ENCODE measurements at regions of chr7 and their contacts with region 1.

Region 1: GRCh38 chr7:21253740-21254687 is 173.9 kb upstream of the SP4 start:
- DNase-seq: peak; percentile 24
- H3K4me3 Mint-ChIP-seq: peak overlapping the region; percentile 47
- H3K27ac Mint-ChIP-seq: no peak overlapping the region
- H3K4me1 Mint-ChIP-seq: peaks cover 9% of the 10 kb centered on the region
- H3K27me3 Mint-ChIP-seq: peaks cover 74% of the 10 kb centered on the region

Region 2: DNA sequence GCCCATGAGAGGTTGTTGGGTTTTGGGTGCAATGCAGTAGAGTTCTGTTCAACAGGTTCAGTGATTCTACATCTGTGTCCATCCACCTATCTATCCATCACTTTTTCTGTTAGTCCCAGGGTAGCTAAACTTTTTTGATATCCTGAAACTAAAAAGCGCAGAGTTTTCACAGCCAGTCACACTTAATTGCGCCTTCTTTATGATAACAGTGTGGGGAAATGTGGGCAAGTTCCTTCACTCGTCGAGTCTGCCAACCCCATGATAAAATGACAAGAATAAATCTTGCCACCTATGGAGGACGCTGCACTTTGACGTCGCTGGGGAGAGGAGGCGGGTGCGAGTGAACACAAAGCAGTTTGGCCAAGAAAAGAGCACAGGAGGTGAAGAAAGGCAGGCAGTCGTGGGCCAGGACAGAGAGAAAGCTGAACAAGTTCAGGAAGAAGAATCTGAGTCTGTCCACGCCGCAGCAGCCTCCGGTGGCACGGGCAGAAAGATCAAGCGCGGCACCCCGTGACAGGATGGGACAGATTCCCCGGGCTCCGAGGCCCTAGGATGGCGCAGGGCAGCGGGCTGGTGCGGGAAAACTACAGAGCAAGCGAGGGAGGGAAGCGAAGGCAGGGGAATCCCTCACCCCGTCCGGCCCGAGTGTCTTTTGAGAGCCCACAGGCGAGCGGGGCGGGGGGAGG is 476.5 kb before region 1 on chr7:
- intact Hi-C with region 1: loop called (anchors 1 kb)
- DNase-seq: no peak
- H3K4me3 Mint-ChIP-seq: peak overlapping the region; percentile 20
- H3K27ac Mint-ChIP-seq: no peak overlapping the region
- H3K4me1 Mint-ChIP-seq: peaks cover 5% of the 10 kb centered on the region
- H3K27me3 Mint-ChIP-seq: peaks cover 67% of the 10 kb centered on the region

Region 3: GRCh38 chr7:21507626-21508343 is 253.8 kb after region 1 on chr7:
- intact Hi-C with region 1: loop called (anchors 1 kb)
- DNase-seq: no peak
- H3K4me3 Mint-ChIP-seq: no peak overlapping the region
- H3K27ac Mint-ChIP-seq: no peak overlapping the region
- H3K4me1 Mint-ChIP-seq: peaks cover 2% of the 10 kb centered on the region
- H3K27me3 Mint-ChIP-seq: no peaks in the 10 kb centered on the region

Region 4: DNA sequence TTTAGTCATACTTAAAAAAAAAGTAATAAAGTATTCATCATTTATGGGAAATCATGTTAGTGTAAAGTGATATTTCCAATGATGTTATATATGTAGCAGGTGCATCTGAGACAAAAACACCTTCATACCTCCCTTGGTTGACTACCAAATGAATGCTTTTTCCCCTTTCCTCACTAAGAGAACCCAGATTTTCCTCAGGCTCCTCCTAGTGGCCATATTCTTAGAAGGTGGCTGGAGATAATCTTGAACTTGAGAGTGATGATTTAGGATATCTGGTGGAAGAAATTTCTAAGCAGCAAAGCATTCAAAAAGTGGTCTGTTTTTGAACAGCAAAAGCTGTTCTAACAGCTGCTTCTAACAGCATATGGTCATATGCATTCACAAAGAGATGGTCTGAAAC is 272.0 kb after region 1 on chr7:
- intact Hi-C with region 1: loop called (anchors 5 kb)
- DNase-seq: no peak
- H3K4me3 Mint-ChIP-seq: no peak overlapping the region
- H3K27ac Mint-ChIP-seq: no peak overlapping the region
- H3K4me1 Mint-ChIP-seq: peaks cover under 1% of the 10 kb centered on the region
- H3K27me3 Mint-ChIP-seq: peaks cover 22% of the 10 kb centered on the region

Region 5: DNA sequence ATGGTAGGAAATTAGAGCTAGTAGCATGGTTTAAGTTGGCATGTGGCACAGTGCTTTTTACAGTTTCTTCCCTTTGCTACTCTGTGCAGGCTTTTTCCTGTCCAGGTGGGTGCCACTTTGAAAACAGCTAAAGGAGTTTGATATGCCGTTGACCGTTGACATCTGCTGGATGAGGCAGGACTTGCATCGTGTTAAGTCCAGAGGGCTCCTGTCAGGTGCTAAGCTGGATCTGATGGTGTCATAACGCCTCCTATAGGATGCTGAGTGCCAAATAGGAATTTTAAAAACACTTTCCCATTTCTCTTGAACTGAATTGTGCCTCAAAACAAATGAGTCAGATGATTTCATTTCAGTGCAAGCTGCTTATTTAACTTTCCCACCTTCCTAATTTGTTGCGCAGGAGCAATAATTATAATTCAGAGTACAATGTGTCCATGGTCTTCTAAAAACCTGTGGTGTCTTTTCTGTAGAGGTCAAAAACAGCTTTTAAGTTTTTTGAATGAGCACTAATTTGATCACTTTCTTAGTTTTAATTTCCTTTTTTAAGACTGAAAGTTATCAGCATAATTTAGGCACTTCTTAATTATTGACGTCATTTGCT is 513.4 kb after region 1 on chr7:
- intact Hi-C with region 1: loop called (anchors 2 kb)
- DNase-seq: peak; percentile 35
- H3K4me3 Mint-ChIP-seq: no peak overlapping the region
- H3K27ac Mint-ChIP-seq: no peak overlapping the region
- H3K4me1 Mint-ChIP-seq: peaks cover 4% of the 10 kb centered on the region
- H3K27me3 Mint-ChIP-seq: peaks cover 31% of the 10 kb centered on the region

Region 6: DNA sequence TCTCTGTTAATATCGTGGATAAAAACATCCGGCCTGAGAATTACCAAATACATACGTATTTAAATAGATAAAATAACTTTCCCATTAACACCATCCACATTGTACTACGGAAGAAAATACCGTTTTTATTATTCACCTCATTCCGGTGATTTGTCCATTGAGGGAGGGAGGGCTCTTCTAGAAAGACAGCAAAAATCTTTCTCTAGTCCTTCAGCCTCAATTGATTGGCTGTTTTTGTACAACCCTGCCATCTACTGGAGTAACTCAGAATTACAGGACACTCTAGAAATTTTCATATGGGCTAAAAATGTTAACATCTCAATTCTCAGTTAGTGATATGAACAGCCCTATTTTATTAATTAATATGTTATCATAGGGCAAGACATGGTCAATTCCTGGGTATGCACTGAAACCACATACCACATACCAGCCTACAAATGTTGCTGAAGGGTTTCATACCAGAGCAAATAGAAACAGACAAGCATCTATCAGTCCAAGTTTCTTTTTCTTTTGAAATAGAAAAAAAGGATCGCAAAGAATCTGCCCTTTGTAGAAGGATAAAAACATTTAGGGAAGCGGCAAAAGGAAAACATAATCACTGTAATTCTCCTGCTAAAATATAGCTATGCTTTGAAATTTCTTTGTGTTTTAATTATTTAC is 747.5 kb after region 1 on chr7:
- intact Hi-C with region 1: loop called (anchors 5 kb)
- DNase-seq: no peak
- H3K4me3 Mint-ChIP-seq: no peak overlapping the region
- H3K27ac Mint-ChIP-seq: no peak overlapping the region
- H3K4me1 Mint-ChIP-seq: peaks cover 6% of the 10 kb centered on the region
- H3K27me3 Mint-ChIP-seq: peaks cover 17% of the 10 kb centered on the region